Esophagus squamous epithelium (tissue), 5 donors: ENCODE measurements at regions of chr4 and their contacts with region 1.

Region 1: DNA sequence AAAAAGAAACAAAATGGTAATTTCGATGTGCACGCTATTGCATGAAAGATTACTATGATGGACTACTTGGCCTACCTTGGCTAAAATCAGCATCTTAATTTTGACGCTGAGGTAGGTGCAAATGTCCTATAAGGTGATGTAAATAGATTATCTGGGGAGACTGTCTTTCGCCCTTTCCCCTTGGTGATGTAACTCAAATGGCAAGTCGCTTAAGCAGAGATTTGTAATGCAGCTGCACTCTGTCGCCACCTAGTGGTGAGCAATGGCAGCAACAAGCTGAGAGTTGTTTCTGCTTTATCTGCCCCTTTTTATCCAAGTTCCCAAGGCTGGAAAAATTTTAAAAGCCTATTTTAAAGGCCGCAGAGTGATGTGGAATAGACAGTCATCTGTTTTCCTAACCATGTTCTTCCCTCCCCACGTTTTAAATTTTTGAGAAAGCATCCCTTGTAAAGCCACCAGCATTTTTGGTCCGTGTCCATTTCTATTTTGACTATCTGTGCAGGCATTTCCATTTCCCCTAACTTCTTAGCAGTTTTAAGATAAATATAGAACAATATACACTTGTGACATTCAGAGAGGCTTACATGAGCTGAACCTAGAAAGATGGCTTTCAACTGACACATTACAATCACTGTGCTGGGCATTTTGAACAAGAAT is 62.4 kb upstream of the PDLIM3 start:
- DNase-seq: no peak
- H3K4me3 ChIP-seq: no peak overlapping the region
- H3K27ac ChIP-seq: peak overlapping the region in 3 of 4 donors; percentile 31 to 48 (median 39)
- H3K4me1 ChIP-seq: peaks cover 0 to 20% (median 6%) of the 10 kb centered on the region in 3 donors
- H3K27me3 ChIP-seq: no peaks in the 10 kb centered on the region
- CTCF ChIP-seq: peak; percentile 94 to 100 (median 98)
- POLR2A ChIP-seq: no peak

Region 2: GRCh38 chr4:185471235-185472102 is 126.2 kb before region 1 on chr4 and contains the start of gene CCDC110:
- intact Hi-C with region 1: loop called (anchors 5 kb)
- DNase-seq: peak; percentile 82
- H3K4me3 ChIP-seq: peak within 1 kb of the TSS; percentile 60 to 91 (median 78)
- H3K27ac ChIP-seq: peak within 1 kb of the TSS; percentile 68 to 85 (median 82)
- H3K4me1 ChIP-seq: peaks cover 0 to 21% (median 7%) of the 10 kb centered on the region in 3 donors
- H3K27me3 ChIP-seq: no peaks in the 10 kb centered on the region
- CTCF ChIP-seq: peak; percentile 43 to 76 (median 66)
- POLR2A ChIP-seq: peak in 1 of 4 donors; percentile 37
- total RNA-seq, gene CCDC110: 0.18 to 2.3 (median 1.3) TPM

Region 3: DNA sequence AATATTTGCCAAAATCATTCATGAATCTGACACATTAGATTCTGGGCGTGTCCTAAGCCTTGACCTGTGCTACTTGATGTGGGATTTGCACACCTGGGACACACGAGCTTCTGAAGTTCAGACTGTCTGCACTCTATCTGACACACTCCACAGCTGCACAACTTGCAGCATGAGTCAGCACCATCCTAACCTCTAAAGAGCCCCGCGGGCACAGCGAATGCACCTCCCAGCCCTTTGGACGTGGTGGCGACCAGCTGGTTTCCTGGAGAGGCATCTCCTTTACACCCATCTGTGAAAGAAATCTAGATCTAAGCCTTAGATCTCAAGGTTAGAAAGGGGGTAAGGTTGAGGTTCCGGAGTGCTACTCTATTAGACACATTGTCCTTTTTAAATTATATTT is 145.1 kb after region 1 on chr4:
- intact Hi-C with region 1: no loop called
- DNase-seq: no peak
- H3K4me3 ChIP-seq: no peak overlapping the region
- H3K27ac ChIP-seq: no peak overlapping the region
- H3K4me1 ChIP-seq: peaks cover 10 to 29% (median 13%) of the 10 kb centered on the region in 3 donors
- H3K27me3 ChIP-seq: no peaks in the 10 kb centered on the region
- CTCF ChIP-seq: no peak
- POLR2A ChIP-seq: no peak